Mammary epithelial cell (primary cell): ENCODE measurements at regions of chr18 and their contacts with region 1.

Region 1: GRCh38 chr18:10230072-10230471 is 224.4 kb upstream of the APCDD1 start:
- DNase-seq: peak; percentile 91
- H3K4me3 ChIP-seq: no peak overlapping the region
- H3K27ac ChIP-seq: no peak overlapping the region
- H3K4me1 ChIP-seq: peaks cover 16% of the 10 kb centered on the region
- H3K27me3 ChIP-seq: no peaks in the 10 kb centered on the region
- CTCF ChIP-seq: peak; percentile 40 to 52

Region 2: DNA sequence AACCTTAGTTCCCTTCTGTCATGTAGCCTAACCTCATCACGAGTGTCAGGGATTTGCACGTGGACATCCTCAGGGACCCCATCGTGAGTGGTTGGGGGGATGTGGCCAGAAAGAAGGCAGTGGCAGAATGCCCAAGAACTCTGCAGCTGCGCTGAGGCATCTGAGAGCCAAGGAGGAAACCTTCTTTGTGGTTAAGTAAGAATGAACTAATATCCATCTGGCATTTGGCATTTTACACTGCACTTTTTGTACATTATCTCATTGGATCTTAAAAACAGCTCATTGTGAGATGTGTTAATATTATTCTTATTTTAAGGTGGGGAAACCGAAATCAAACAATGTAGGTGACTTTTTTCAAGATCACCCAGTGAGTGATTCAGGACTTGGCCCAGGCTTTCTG is 191.8 kb after region 1 on chr18:
- CTCF ChIA-PET with region 1: no interaction called
- dilution Hi-C with region 1: no loop called
- in situ Hi-C with region 1: no loop called
- intact Hi-C with region 1: loop called (anchors 2 kb)
- DNase-seq: peak; percentile 89
- H3K4me3 ChIP-seq: no peak overlapping the region
- H3K27ac ChIP-seq: peak overlapping the region; percentile 97
- H3K4me1 ChIP-seq: peaks cover 57% of the 10 kb centered on the region
- H3K27me3 ChIP-seq: no peaks in the 10 kb centered on the region
- CTCF ChIP-seq: no peak

Region 3: GRCh38 chr18:10453806-10454673 is 224.0 kb after region 1 on chr18 and contains the start of gene APCDD1:
- CTCF ChIA-PET with region 1: no interaction called
- dilution Hi-C with region 1: no loop called
- in situ Hi-C with region 1: no loop called
- intact Hi-C with region 1: loop called (anchors 10 kb)
- DNase-seq: peak; percentile 11
- H3K4me3 ChIP-seq: peak within 1 kb of the TSS; percentile 36 to 52 (median 48)
- H3K27ac ChIP-seq: no peak within 1 kb of the TSS
- H3K4me1 ChIP-seq: peaks cover 7% of the 10 kb centered on the region
- H3K27me3 ChIP-seq: peaks cover 23% of the 10 kb centered on the region
- CTCF ChIP-seq: no peak
- total RNA-seq, gene APCDD1: 9.7 to 24.8 TPM

Region 4: DNA sequence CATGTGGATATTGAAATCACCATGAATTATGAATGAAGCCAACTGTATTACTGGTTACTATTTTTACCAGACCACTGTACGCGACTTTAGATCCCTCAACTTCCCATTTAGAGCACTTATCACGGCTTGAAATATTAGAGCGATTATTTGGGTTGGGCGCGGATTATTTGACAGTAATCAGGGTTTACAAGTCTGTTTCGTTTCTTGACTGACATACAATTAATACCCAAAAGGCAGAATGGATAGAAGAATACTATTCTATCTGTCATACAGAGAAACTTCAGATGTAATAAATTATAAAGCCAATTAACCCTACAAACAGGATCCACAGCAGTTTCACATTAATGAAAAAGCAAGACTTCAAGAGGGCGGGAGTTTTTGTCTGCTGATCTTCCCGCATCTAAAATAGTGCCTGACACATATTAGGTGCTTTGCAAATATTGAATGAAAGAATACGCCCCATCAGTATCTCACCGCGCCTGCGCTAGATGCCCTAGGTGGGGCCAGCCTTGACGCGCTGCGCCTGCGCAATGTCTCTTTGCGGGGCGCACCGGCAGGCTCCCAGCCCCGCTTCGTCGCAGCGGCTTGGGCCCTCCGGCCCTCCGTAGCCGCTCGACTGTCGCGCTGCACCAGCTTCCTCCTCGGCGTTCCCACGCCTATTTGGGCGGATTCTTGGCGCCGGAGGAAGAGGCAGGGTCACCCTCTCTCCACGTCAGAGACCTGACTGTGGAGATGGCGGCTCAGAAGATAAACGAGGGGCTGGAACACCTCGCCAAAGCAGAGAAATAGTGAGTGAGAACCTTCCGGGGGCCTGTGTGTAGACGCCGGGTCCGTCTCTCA is 295.5 kb after region 1 on chr18 and contains the start of gene NAPG:
- CTCF ChIA-PET with region 1: no interaction called
- dilution Hi-C with region 1: no loop called
- in situ Hi-C with region 1: no loop called
- intact Hi-C with region 1: loop called (anchors 10 kb)
- DNase-seq: peak; percentile 91
- H3K4me3 ChIP-seq: peak within 1 kb of the TSS; percentile 67 to 86 (median 78)
- H3K27ac ChIP-seq: peak within 1 kb of the TSS; percentile 74
- H3K4me1 ChIP-seq: peaks cover 23% of the 10 kb centered on the region
- H3K27me3 ChIP-seq: no peaks in the 10 kb centered on the region
- CTCF ChIP-seq: no peak
- total RNA-seq, gene NAPG: 31.0 to 51.3 TPM